CD8-positive, alpha-beta T cell (primary cell): ENCODE measurements at regions of chr19 and their contacts with region 1.

Region 1: GRCh38 chr19:28324275-28325060 is 888.5 kb downstream of the UQCRFS1 start:
- DNase-seq: no peak
- ATAC-seq: no peak
- H3K4me3 ChIP-seq: no peak overlapping the region
- H3K4me3 Mint-ChIP-seq: no peak overlapping the region
- H3K27ac ChIP-seq: no peak overlapping the region
- H3K27ac Mint-ChIP-seq: no peak overlapping the region
- H3K4me1 ChIP-seq: no peaks in the 10 kb centered on the region
- H3K4me1 Mint-ChIP-seq: no peaks in the 10 kb centered on the region
- H3K27me3 ChIP-seq: no peaks in the 10 kb centered on the region
- H3K27me3 Mint-ChIP-seq: no peaks in the 10 kb centered on the region
- CTCF ChIP-seq: no peak

Region 2: DNA sequence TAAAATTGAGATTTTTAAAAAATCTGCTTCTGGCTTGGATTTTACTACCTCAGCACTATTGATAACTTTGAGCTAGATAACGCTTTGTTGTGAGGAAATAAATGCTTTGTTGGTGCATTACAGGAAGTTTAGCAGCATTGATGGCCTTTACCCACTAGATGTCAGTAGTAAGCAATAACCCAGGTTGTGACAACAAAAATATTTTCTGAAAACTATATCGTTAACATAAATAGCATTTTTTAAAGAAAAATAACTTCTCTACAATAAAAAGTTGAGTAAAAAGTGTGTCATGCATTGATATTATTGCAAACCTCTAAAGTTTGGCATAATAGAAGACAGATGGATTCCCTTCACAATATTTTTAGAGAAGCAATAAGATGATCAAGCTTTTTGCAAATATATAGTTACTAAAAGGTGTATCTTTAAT is 358.1 kb before region 1 on chr19:
- CTCF ChIA-PET with region 1: interaction called, 4 read pairs
- POLR2A ChIA-PET with region 1: no interaction called
- intact Hi-C with region 1: loop called in 1 of 2 experiments (anchors 2 kb)
- DNase-seq: peak in 2 of 9 experiments; percentile 4
- ATAC-seq: no peak
- H3K4me3 ChIP-seq: no peak overlapping the region
- H3K4me3 Mint-ChIP-seq: no peak overlapping the region
- H3K27ac ChIP-seq: no peak overlapping the region
- H3K27ac Mint-ChIP-seq: no peak overlapping the region
- H3K4me1 ChIP-seq: no peaks in the 10 kb centered on the region
- H3K4me1 Mint-ChIP-seq: no peaks in the 10 kb centered on the region
- H3K27me3 ChIP-seq: no peaks in the 10 kb centered on the region
- H3K27me3 Mint-ChIP-seq: peaks cover 2% of the 10 kb centered on the region
- CTCF ChIP-seq: peak; percentile 31

Region 3: GRCh38 chr19:28242297-28242927 is 82.1 kb before region 1 on chr19:
- CTCF ChIA-PET with region 1: interaction called, 5 read pairs
- POLR2A ChIA-PET with region 1: no interaction called
- intact Hi-C with region 1: loop called (anchors 2 to 10 kb)
- DNase-seq: peak in 3 of 9 experiments; percentile 2 to 43 (median 29)
- ATAC-seq: no peak
- H3K4me3 ChIP-seq: no peak overlapping the region
- H3K4me3 Mint-ChIP-seq: no peak overlapping the region
- H3K27ac ChIP-seq: no peak overlapping the region
- H3K27ac Mint-ChIP-seq: no peak overlapping the region
- H3K4me1 ChIP-seq: no peaks in the 10 kb centered on the region
- H3K4me1 Mint-ChIP-seq: no peaks in the 10 kb centered on the region
- H3K27me3 ChIP-seq: no peaks in the 10 kb centered on the region
- H3K27me3 Mint-ChIP-seq: no peaks in the 10 kb centered on the region
- CTCF ChIP-seq: peak; percentile 45

Region 4: DNA sequence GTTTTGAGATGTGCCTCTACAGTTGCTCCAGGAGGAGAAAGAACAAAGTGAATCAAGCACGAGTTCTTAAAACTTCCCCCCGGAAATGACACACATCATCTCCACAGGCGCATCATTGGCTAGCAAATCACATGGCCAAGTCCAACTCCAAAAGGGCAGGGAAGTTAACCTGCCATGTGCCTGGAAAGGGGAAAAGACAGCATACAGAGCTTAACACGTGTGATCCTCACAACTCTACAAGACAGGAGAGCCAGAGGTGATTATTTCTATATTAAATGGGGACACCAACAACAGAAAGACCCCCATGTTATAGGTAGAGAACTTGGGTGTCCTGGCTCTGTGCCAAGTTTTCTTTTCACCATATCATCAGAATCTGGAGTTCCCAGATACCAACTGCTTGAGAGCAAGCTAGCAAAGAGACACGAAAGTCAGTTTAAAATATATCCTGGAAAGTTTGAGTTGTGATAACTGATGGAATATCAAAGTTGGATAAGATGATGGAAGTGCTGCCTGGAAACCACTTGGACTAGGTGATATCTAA is 17.4 kb after region 1 on chr19:
- CTCF ChIA-PET with region 1: no interaction called
- POLR2A ChIA-PET with region 1: no interaction called
- intact Hi-C with region 1: no loop called
- DNase-seq: no peak
- ATAC-seq: no peak
- H3K4me3 ChIP-seq: no peak overlapping the region
- H3K4me3 Mint-ChIP-seq: no peak overlapping the region
- H3K27ac ChIP-seq: no peak overlapping the region
- H3K27ac Mint-ChIP-seq: no peak overlapping the region
- H3K4me1 ChIP-seq: no peaks in the 10 kb centered on the region
- H3K4me1 Mint-ChIP-seq: no peaks in the 10 kb centered on the region
- H3K27me3 ChIP-seq: no peaks in the 10 kb centered on the region
- H3K27me3 Mint-ChIP-seq: no peaks in the 10 kb centered on the region
- CTCF ChIP-seq: no peak

Region 5: GRCh38 chr19:28358633-28359032 is 34.2 kb after region 1 on chr19:
- CTCF ChIA-PET with region 1: no interaction called
- POLR2A ChIA-PET with region 1: no interaction called
- intact Hi-C with region 1: no loop called
- DNase-seq: no peak
- ATAC-seq: no peak
- H3K4me3 ChIP-seq: no peak overlapping the region
- H3K4me3 Mint-ChIP-seq: no peak overlapping the region
- H3K27ac ChIP-seq: no peak overlapping the region
- H3K27ac Mint-ChIP-seq: no peak overlapping the region
- H3K4me1 ChIP-seq: no peaks in the 10 kb centered on the region
- H3K4me1 Mint-ChIP-seq: no peaks in the 10 kb centered on the region
- H3K27me3 ChIP-seq: no peaks in the 10 kb centered on the region
- H3K27me3 Mint-ChIP-seq: no peaks in the 10 kb centered on the region
- CTCF ChIP-seq: no peak